Endothelial cell of umbilical vein (primary cell): ENCODE measurements at regions of chr7 and their contacts with region 1.

Region 1: DNA sequence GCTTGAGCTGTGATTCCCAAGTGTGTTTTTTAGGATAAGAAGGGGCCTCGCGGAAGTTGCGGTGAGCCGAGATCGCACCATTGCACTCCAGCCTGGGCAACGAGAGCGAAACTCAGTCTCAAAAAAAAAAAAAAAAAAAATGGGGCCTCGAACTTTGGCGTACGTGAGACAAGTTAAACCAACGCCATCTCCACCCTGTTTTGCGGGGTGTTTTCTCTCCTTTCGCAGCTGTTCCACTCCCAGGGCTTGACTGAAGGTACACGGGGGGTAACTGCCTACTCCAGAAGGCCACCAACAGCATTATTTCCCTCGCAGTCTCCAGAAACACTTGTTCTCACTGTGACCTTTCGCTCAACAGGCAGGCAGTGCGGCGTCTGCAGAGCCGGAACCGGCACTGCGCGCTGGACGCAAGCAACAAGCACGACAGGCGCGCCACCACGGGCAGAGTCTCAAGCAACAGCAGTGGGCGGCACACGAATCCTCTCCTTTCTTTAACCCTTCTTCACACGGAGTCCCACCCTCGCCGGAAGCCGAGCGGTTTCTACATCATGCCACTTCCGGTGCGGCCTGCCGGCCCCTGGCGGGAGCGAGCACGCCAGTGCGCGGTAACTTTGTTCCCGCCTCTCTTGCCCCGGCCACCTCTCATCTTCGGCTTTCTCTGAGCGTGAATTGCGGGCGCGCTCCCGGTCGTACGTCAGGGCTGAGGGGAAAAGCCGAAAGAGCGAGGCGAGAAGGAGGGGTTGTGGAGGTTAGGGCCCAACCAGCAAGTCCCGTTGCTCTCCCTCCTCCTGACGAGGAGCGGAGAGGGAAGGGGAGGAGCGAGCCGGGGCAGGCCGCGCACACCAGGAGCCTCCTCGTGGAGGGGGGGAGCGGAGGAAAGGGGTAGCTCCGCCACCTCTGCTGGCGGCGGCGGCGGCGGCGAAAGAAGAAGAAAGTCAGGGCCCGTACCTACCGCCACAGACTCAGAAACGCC is 814 bp upstream of the CDK13 start:
- DNase-seq: peak; percentile 100
- H3K4me3 ChIP-seq: peak overlapping the region; percentile 0 to 76 (median 73)
- H3K27ac ChIP-seq: peak overlapping the region; percentile 81
- H3K4me1 ChIP-seq: peaks cover 19% of the 10 kb centered on the region
- H3K27me3 ChIP-seq: no peaks in the 10 kb centered on the region
- CTCF ChIP-seq: no peak
- POLR2A ChIP-seq: peak; percentile 95

Region 2: DNA sequence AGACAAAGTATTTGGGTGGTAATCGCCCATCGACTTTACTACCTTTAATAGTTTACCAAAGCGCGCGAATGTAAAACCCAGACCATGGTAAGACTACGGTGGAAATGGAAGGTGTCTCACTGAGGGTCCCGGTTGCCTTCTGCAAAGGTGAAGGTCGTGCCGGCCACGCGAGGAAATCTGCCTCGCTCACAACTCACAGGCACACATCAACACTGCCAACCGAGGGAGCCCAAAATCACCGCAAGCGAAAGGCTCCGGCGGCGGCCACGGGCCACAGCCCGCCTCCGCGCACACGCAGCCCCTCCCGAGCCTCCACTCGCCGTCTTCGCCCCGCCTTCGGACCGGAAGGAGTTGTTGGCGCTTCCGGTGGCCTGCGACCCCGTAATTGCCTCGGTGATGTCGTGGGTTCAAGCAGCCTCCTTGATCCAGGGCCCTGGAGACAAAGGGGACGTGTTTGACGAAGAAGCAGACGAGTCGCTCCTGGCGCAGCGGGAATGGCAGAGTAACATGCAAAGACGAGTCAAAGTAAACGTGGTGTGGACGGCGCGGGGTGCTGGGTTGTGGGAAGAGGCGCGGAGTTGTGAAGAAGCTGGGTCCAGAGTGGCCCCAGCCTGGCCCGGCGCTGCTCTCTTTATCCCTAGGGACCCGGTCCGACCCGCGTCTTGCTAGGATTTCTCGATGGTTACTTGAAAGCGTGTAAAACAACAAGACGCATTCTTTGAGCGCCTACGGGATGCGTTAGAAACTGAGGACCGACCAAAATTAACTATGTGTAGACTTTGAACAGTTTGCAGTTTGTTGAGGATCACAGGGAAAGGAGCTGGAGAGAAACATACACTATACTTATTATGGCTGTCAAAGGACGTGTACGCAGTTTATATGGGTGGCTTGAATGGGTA is 383.0 kb before region 1 on chr7 and contains the start of gene YAE1:
- CTCF ChIA-PET with region 1: no interaction called
- POLR2A ChIA-PET with region 1: no interaction called
- dilution Hi-C with region 1: no loop called
- intact Hi-C with region 1: loop called (anchors 5 kb)
- DNase-seq: peak; percentile 75
- H3K4me3 ChIP-seq: peak within 1 kb of the TSS; percentile 54 to 91 (median 68)
- H3K27ac ChIP-seq: peak within 1 kb of the TSS; percentile 31
- H3K4me1 ChIP-seq: peaks cover 11% of the 10 kb centered on the region
- H3K27me3 ChIP-seq: no peaks in the 10 kb centered on the region
- CTCF ChIP-seq: no peak
- POLR2A ChIP-seq: peak; percentile 75
- total RNA-seq, gene YAE1: 20.6 and 20.7 TPM in 2 replicates

Region 3: DNA sequence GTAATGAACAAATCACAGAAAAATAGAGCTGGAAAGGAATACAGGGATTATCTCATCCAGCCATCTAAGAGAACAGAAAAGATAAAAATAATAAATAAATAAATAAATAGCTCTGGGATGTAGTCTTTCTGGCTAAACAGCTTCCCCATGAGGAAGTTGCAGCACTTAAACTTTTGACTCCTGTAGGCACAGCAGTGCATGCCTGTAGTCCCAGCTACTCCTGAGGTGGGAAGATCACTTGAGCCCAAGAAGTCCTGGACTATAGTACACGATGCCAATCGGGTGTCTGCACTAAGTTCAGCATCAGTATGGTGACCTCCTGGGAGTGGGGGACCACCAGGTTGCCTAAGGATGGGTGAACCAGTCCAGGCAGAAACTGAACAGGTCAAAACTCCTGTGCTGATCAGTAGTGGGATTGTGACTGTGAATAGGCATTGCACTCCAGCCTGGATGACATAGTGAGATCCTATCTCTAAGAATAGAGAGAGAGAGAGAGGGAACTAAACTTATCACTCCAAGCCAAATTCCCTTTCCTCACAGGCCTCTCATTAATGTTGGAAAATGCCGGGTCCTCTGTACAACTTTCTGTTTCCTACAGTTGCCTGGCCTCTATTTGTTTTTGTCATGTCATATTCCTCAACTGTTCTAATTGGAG is 60.9 kb before region 1 on chr7:
- CTCF ChIA-PET with region 1: no interaction called
- POLR2A ChIA-PET with region 1: no interaction called
- dilution Hi-C with region 1: no loop called
- intact Hi-C with region 1: no loop called
- DNase-seq: no peak
- H3K4me3 ChIP-seq: no peak overlapping the region
- H3K27ac ChIP-seq: no peak overlapping the region
- H3K4me1 ChIP-seq: no peaks in the 10 kb centered on the region
- H3K27me3 ChIP-seq: peaks cover 8 to 14% of the 10 kb centered on the region in 2 experiments
- CTCF ChIP-seq: no peak
- POLR2A ChIP-seq: no peak

Region 4: GRCh38 chr7:40134428-40135316 is 185.4 kb after region 1 on chr7 and contains the starts of genes MPLKIP and SUGCT:
- CTCF ChIA-PET with region 1: no interaction called
- POLR2A ChIA-PET with region 1: no interaction called
- dilution Hi-C with region 1: no loop called
- intact Hi-C with region 1: loop called (anchors 1 kb)
- DNase-seq: peak; percentile 89
- H3K4me3 ChIP-seq: peak within 1 kb of the TSS; percentile 63 to 99 (median 99)
- H3K27ac ChIP-seq: peak within 1 kb of the TSS; percentile 67
- H3K4me1 ChIP-seq: peaks cover 14% of the 10 kb centered on the region
- H3K27me3 ChIP-seq: no peaks in the 10 kb centered on the region
- CTCF ChIP-seq: peak; percentile 96 to 99
- POLR2A ChIP-seq: peak; percentile 35
- total RNA-seq, gene MPLKIP: 40.5 and 40.9 TPM in 2 replicates
- total RNA-seq, gene SUGCT: 1.4 and 2.2 TPM in 2 replicates

Region 5: GRCh38 chr7:40211276-40212003 is 262.2 kb after region 1 on chr7:
- CTCF ChIA-PET with region 1: no interaction called
- POLR2A ChIA-PET with region 1: no interaction called
- dilution Hi-C with region 1: no loop called
- intact Hi-C with region 1: no loop called
- DNase-seq: peak; percentile 61
- H3K4me3 ChIP-seq: no peak overlapping the region
- H3K27ac ChIP-seq: no peak overlapping the region
- H3K4me1 ChIP-seq: no peaks in the 10 kb centered on the region
- H3K27me3 ChIP-seq: no peaks in the 10 kb centered on the region
- CTCF ChIP-seq: no peak
- POLR2A ChIP-seq: no peak